Naive thymus-derived CD4-positive, alpha-beta T cell (primary cell): ENCODE measurements at regions of chr10 and their contacts with region 1.

Region 1: GRCh38 chr10:100518761-100519241 is 860 bp downstream of the SEC31B start:
- DNase-seq: peak in 7 of 9 donors; percentile 48 to 65 (median 58)
- ATAC-seq: peak; percentile 83
- H3K4me3 ChIP-seq: no peak overlapping the region
- H3K4me3 Mint-ChIP-seq: peak overlapping the region in 1 of 10 donors; percentile 30
- H3K27ac ChIP-seq: no peak overlapping the region
- H3K27ac Mint-ChIP-seq: peak overlapping the region in 5 of 9 donors; percentile 62 to 83 (median 72)
- H3K4me1 ChIP-seq: peaks cover 0 to 10% of the 10 kb centered on the region in 2 donors
- H3K4me1 Mint-ChIP-seq: peaks cover 4 to 49% (median 16%) of the 10 kb centered on the region in 7 donors
- H3K27me3 ChIP-seq: no peaks in the 10 kb centered on the region
- H3K27me3 Mint-ChIP-seq: no peaks in the 10 kb centered on the region

Region 2: GRCh38 chr10:100338434-100339036 is 180.3 kb before region 1 on chr10:
- CTCF ChIA-PET with region 1: interaction called, 11 read pairs
- POLR2A ChIA-PET with region 1: no interaction called
- intact Hi-C with region 1: loop called (anchors 1 kb)
- DNase-seq: peak; percentile 50 to 82 (median 74)
- ATAC-seq: peak; percentile 94
- H3K4me3 ChIP-seq: no peak overlapping the region
- H3K4me3 Mint-ChIP-seq: no peak overlapping the region
- H3K27ac ChIP-seq: no peak overlapping the region
- H3K27ac Mint-ChIP-seq: peak overlapping the region in 2 of 9 donors; percentile 69 to 82
- H3K4me1 ChIP-seq: no peaks in the 10 kb centered on the region
- H3K4me1 Mint-ChIP-seq: peaks cover 0 to 35% (median 0%) of the 10 kb centered on the region in 7 donors
- H3K27me3 ChIP-seq: no peaks in the 10 kb centered on the region
- H3K27me3 Mint-ChIP-seq: peaks cover 0 to 15% (median 0%) of the 10 kb centered on the region in 5 donors

Region 3: DNA sequence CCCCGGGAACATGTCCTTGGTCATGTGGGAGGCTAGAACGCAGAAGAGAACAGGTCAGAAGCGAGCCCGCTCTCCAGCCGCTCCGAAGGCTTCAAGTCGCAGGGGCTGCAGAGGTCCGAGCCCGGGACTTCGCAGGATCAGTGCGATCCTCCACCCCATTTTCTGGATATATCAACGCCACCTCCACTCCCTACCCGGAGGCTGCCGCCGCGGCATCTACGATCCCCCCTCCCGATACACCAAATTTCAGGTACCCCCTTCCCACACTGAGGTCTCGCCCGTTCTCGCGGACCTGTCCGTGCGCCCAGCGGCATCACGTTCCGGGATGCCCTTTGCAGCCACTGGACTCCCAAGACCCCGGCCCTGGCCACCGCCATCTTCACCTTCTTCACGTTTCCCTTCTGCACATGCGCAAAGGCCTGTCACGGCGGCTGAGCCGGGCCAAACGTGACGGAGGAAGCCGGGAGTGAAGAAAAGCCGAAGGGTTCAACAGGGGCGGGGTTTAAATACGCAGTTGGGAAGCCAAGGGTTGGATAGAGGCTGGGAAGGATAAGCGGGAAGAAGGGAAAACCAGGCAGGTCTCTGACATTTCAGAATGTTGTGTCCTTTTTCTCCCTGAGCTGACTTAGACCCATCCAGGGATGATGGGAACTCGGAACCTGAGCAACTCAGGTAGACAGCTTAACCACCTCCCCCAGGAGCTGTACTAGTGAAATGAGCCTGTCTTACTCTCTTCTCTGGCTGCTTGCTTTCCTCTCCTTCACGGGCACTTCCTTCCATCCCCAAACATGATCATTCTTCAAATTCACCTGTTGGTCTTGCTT is 10.9 kb after region 1 on chr10 and contains the start of gene NDUFB8:
- CTCF ChIA-PET with region 1: interaction called, 18 read pairs
- POLR2A ChIA-PET with region 1: interaction called, 5 read pairs
- intact Hi-C with region 1: no loop called
- DNase-seq: peak; percentile 78 to 90 (median 85)
- ATAC-seq: peak; percentile 85
- H3K4me3 ChIP-seq: peak within 1 kb of the TSS; percentile 93
- H3K4me3 Mint-ChIP-seq: peak within 1 kb of the TSS; percentile 90 to 100 (median 98)
- H3K27ac ChIP-seq: peak within 1 kb of the TSS; percentile 89
- H3K27ac Mint-ChIP-seq: peak within 1 kb of the TSS; percentile 90 to 100 (median 98)
- H3K4me1 ChIP-seq: peaks cover 20 to 31% of the 10 kb centered on the region in 2 donors
- H3K4me1 Mint-ChIP-seq: peaks cover 14 to 46% (median 33%) of the 10 kb centered on the region in 7 donors
- H3K27me3 ChIP-seq: no peaks in the 10 kb centered on the region
- H3K27me3 Mint-ChIP-seq: no peaks in the 10 kb centered on the region
- total RNA-seq, gene NDUFB8: 137 to 304 (median 142) TPM